PC-9 (cell line): ENCODE measurements at regions of chr17 and their contacts with region 1.

Region 1: GRCh38 chr17:8173056-8173870 is 2.9 kb downstream of the TMEM107 start:
- DNase-seq: peak; percentile 79 to 96
- H3K4me3 ChIP-seq: peak overlapping the region; percentile 63
- H3K27ac ChIP-seq: peak overlapping the region; percentile 93
- H3K4me1 ChIP-seq: 0 out of 2 replicates have a peak, but pooled peaks cover 7% of the 10 kb centered on the region
- H3K27me3 ChIP-seq: no peaks in the 10 kb centered on the region
- CTCF ChIP-seq: no peak

Region 2: DNA sequence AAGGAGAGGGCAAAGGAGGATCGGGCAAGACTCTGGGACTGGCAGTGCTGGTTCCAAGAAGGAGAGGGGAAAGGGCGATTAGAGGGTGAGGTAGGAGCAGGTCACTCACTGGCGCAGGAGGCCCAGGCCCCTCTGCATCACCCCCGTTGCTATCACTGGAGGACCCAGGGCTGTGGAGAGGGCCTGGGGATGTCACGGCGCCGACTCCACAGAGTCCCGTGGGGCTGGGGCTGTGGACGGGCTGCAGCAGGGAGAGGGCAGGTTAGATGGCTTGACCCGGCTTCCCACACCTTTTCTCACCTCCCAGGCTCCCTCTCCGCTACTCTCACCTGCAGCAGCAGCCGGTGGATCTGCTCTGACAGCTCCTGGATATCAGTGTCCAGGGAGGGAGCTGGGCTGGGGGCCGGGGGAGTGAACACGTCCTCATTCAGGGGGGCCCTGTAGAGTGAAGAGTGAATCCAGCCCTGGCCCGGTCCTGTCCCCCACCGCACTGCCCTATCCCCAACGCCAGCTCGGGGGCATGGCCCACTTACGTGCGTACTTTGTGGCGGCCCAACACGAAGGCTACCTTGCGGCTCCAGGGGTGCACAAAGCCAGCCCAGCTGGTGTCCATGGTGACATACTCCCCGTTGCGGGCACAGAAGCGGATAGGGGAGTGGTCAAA is 26.0 kb before region 1 on chr17:
- CTCF ChIA-PET with region 1: no interaction called
- POLR2A ChIA-PET with region 1: no interaction called
- intact Hi-C with region 1: no loop called
- DNase-seq: no peak
- H3K4me3 ChIP-seq: no peak overlapping the region
- H3K27ac ChIP-seq: no peak overlapping the region
- H3K4me1 ChIP-seq: no peaks in the 10 kb centered on the region
- H3K27me3 ChIP-seq: no peaks in the 10 kb centered on the region
- CTCF ChIP-seq: no peak

Region 3: DNA sequence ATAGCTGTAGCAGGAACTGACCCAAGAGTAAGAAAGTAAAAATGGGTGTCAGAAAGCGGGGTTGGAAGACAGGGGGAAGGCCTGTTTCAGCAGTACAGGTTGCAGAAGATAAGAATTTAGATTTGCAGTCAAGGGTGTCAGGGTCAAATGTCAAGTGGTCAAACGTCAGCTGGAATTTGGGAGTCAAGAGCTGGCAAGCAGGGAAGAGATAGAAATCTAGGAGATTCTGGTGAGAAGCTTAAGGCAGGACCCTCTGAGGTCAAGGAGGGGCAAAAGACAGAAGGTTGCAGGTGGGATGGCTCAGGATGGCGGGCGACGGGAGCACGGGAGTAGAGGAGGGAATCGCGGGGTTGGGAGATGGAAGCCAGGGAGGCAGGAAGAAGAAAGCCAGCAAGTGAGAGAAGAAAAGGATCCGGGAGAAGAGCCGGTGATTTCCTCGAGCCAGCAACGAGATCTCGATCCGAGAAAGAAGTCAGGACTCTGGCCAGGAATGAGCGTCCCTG is 121.6 kb after region 1 on chr17:
- CTCF ChIA-PET with region 1: no interaction called
- POLR2A ChIA-PET with region 1: interaction called, 10 read pairs
- intact Hi-C with region 1: no loop called
- DNase-seq: no peak
- H3K4me3 ChIP-seq: peak overlapping the region; percentile 66; the same call in 1 of the 2 replicates
- H3K27ac ChIP-seq: no peak overlapping the region
- H3K4me1 ChIP-seq: no peaks in the 10 kb centered on the region; the same call in 1 of the 2 replicates
- H3K27me3 ChIP-seq: no peaks in the 10 kb centered on the region
- CTCF ChIP-seq: no peak

Region 4: DNA sequence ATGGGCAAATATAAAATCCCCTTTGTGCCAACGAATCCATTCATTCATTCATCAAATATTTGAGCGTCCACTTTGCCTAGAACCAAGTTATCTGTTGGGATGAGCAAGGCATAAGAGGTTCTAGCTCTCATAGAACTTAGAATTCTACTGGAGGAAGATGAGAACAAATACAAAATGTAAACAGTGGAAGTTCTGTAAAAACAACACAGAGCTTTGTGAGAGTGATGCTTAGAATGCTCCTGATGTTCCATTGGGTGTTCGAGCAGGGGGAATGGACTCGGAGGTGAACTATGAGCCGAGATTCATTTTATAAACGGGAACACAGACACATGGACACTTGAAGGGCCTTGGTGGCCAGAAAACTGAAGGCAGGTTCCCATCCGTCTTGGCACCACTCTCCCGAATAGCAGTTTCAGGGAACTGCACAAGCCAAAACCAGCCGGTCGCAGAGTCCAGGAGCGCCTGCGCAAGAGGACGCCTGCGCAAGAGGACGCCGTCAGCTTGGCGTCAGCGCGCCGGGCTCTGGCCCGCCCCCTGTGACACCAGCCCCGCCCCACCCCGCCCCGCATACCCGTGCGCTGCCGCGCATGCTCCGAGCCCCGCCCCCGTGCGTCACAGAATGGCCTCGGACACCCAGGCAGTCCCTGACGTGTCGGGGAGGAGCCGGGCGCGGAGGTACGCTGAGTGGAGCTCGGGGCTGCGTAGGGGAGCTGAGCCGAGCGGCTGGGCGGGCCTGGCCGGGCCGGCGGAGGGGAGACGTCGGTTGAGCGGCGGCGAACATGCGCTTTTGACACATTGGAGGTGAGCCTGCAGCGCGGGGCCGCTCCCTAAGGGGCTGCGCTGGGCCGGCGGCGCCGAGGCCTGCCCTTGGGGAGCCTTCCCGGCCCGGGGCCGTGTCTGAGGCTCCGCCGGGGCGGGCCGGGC is 262.2 kb after region 1 on chr17 and contains the start of gene NDEL1:
- CTCF ChIA-PET with region 1: no interaction called
- POLR2A ChIA-PET with region 1: interaction called, 10 read pairs
- intact Hi-C with region 1: no loop called
- DNase-seq: peak; percentile 86 to 99
- H3K4me3 ChIP-seq: peak within 1 kb of the TSS; percentile 84
- H3K27ac ChIP-seq: peak within 1 kb of the TSS; percentile 86
- H3K4me1 ChIP-seq: peaks cover 9% of the 10 kb centered on the region; the same call in 1 of the 2 replicates
- H3K27me3 ChIP-seq: no peaks in the 10 kb centered on the region
- CTCF ChIP-seq: no peak
- total RNA-seq, gene NDEL1: 60.8 and 78.4 TPM in 2 replicates